ENCODE measurements at regions of chr15 and their contacts with region 1.

Region 1: GRCh38 chr15:31215490-31216214 is 111.0 kb upstream of the KLF13 start:
- DNase-seq: peak; percentile 25 to 86
- H3K4me3 ChIP-seq: peak overlapping the region; percentile 63 to 76
- H3K27ac ChIP-seq: peak overlapping the region; percentile 87 to 91
- H3K4me1 ChIP-seq: peaks cover 10 to 14% of the 10 kb centered on the region in 2 donors
- H3K27me3 ChIP-seq: no peaks in the 10 kb centered on the region
- CTCF ChIP-seq: peak; percentile 83 to 90 (median 88)

Region 2: GRCh38 chr15:31236184-31237042 is 20.8 kb after region 1 on chr15:
- intact Hi-C with region 1: loop called (anchors 1 kb)
- DNase-seq: peak; percentile 46 to 92
- H3K4me3 ChIP-seq: peak overlapping the region in 1 of 2 donors; percentile 56
- H3K27ac ChIP-seq: peak overlapping the region; percentile 56 to 81
- H3K4me1 ChIP-seq: peaks cover 0 to 13% of the 10 kb centered on the region in 2 donors
- H3K27me3 ChIP-seq: no peaks in the 10 kb centered on the region
- CTCF ChIP-seq: no peak

Region 3: GRCh38 chr15:31247404-31247803 is 31.8 kb after region 1 on chr15:
- intact Hi-C with region 1: no loop called
- DNase-seq: no peak
- H3K4me3 ChIP-seq: no peak overlapping the region
- H3K27ac ChIP-seq: no peak overlapping the region
- H3K4me1 ChIP-seq: no peaks in the 10 kb centered on the region
- H3K27me3 ChIP-seq: no peaks in the 10 kb centered on the region
- CTCF ChIP-seq: no peak

Measured in ascending aorta (tissue), 2 donors.